ENCODE measurements at regions of chr1 and their contacts with region 1.

Region 1: GRCh38 chr1:110780600-110781484 is 92.1 kb upstream of the CD53 start:
- DNase-seq: peak; percentile 35 to 80 (median 67)
- H3K4me3 ChIP-seq: peak overlapping the region in 1 of 59 donors; percentile 21
- H3K27ac ChIP-seq: peak overlapping the region in 2 of 59 donors; percentile 7 to 31
- H3K27me3 ChIP-seq: peaks cover 0 to 7% (median 0%) of the 10 kb centered on the region in 45 donors
- CTCF ChIP-seq: peak; percentile 51 to 91 (median 82)

Region 2: DNA sequence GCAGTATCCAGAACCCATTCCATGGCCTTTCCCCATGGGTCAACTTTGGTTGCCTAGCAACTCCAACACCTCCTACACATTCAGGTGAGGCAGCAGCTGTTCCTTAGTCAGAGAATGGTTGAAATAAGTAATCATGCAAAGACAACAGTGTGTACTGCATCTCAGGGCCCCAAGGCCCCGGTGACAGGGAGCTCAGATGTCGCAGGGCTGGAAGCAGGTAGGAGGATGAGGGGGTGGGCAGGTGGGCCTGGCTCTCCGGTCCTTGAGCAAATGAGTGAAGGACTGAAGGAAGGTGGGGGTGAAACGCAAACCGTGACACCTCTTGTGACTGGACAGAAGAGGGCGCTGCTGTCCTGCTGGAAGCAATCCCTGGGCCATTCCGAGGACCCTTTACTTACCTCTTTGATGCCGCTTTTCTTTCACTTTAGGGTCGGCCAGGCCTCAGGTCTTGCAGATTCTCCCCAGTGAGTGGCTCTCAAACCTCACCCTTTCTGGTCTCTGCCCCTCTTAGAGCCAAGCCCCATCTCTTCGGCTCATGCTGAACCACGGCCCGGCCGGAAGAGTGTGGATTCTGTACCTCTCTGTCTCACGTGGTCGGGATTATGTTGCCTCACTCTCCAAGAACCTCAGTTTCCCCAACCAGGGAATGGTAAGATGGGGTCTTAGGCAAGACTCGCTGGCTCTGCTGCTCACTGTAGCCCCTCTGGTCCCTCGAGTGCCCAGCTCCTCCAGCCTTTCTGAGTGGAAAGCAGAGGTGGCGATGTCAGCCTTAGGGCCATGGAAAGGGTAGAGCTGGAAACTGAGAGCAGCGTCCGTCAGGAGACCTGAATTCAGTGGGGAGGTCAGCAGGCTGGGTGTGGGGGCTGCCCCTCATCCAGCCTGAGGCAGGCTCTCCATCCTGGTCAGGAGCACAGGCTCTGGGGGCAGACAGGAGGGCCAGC is 256.3 kb before region 1 on chr1:
- intact Hi-C with region 1: loop called (anchors 5 kb)
- DNase-seq: peak; percentile 40 to 79 (median 56)
- H3K4me3 ChIP-seq: peak overlapping the region in 47 of 59 donors; percentile 9 to 61 (median 41)
- H3K27ac ChIP-seq: peak overlapping the region in 4 of 59 donors; percentile 21 to 44 (median 32)
- H3K27me3 ChIP-seq: peaks cover 0 to 27% (median 0%) of the 10 kb centered on the region in 45 donors
- CTCF ChIP-seq: peak; percentile 56 to 95 (median 86)

Region 3: GRCh38 chr1:110619412-110620249 is 161.2 kb before region 1 on chr1:
- intact Hi-C with region 1: loop called (anchors 5 kb)
- DNase-seq: peak; percentile 82 to 91 (median 89)
- H3K4me3 ChIP-seq: peak overlapping the region in 41 of 59 donors; percentile 4 to 61 (median 36)
- H3K27ac ChIP-seq: peak overlapping the region in 38 of 59 donors; percentile 8 to 76 (median 51)
- H3K27me3 ChIP-seq: peaks cover 0 to 8% (median 0%) of the 10 kb centered on the region in 45 donors
- CTCF ChIP-seq: peak; percentile 87 to 99 (median 97)

Region 4: GRCh38 chr1:110630839-110631663 is 149.8 kb before region 1 on chr1:
- intact Hi-C with region 1: loop called (anchors 2 to 5 kb)
- DNase-seq: peak in 9 of 10 donors; percentile 45 to 86 (median 73)
- H3K4me3 ChIP-seq: no peak overlapping the region
- H3K27ac ChIP-seq: no peak overlapping the region
- H3K27me3 ChIP-seq: peaks cover 0 to 8% (median 0%) of the 10 kb centered on the region in 45 donors
- CTCF ChIP-seq: peak; percentile 46 to 95 (median 88)

Region 5: DNA sequence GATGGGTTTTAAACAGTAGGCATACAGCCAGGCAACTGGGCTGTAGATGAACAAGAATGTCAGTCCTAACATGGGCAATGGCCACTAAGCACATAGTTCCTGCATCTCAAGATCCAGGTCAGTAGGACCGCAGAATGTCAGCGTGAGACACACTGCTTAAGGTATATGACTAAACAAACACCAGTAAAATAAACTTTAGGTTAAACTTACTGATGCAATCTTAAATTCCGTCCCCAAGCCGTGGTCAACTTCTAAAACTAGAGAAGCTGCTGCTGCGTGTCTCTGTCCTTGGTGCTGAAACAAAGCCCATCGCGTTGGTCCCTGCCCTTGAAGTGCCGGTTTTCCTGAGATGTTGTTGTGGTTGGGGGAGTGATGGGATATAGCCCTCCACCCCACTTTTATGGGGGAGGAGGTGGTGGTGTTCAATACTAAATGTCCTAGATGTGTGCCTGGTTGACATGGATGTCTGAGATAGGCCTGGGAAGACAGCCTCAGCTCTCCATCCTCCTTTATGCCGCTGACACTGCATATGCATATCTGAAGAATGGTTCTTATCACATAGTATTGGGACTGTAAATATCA is 34.2 kb before region 1 on chr1:
- intact Hi-C with region 1: no loop called
- DNase-seq: no peak
- H3K4me3 ChIP-seq: no peak overlapping the region
- H3K27ac ChIP-seq: no peak overlapping the region
- H3K27me3 ChIP-seq: peaks cover 0 to 11% (median 0%) of the 10 kb centered on the region in 45 donors
- CTCF ChIP-seq: no peak